ENCODE measurements at regions of chr10 and their contacts with region 1.

Region 1: GRCh38 chr10:60444494-60445064 is 54.9 kb upstream of the ANK3 start:
- DNase-seq: no peak
- H3K4me3 Mint-ChIP-seq: no peak overlapping the region
- H3K27ac Mint-ChIP-seq: no peak overlapping the region
- H3K4me1 Mint-ChIP-seq: peaks cover 27% of the 10 kb centered on the region
- H3K27me3 Mint-ChIP-seq: no peaks in the 10 kb centered on the region
- CTCF ChIP-seq: peak; percentile 61

Region 2: DNA sequence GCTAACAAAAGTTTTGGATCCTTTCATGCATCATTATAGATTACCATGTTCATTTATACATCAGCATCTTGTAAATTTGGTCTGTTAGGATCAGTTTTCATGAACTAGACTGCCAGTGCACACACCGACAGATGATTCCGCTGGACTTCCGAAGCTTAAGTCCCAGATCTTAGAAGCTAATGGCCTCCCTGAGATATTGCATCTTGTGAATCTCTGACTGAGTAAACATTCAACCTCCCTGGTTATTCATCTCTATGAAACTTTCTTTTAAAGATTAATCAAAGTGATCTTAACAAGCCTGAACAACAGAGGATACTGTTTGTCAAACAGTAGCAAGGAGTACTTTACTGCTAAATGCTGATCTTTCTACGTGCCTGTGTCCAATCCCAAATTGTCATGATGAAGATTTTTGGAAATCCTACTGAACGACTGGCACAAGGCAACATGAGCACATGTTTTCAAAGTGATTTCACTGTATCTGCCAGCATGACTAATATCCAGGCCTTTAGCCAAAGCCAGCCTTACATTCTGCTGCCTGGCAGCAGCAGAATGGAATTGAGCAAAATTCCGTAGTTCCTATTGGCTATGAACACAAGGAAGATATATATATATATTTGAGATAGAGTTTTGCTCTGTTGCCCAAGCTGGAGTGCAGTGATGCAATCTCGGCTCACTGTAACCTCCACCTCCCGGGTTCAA is 36.4 kb after region 1 on chr10:
- CTCF ChIA-PET with region 1: no interaction called
- intact Hi-C with region 1: no loop called
- DNase-seq: peak; percentile 60
- H3K4me3 Mint-ChIP-seq: no peak overlapping the region
- H3K27ac Mint-ChIP-seq: peak overlapping the region; percentile 55
- H3K4me1 Mint-ChIP-seq: peaks cover 30% of the 10 kb centered on the region
- H3K27me3 Mint-ChIP-seq: no peaks in the 10 kb centered on the region
- CTCF ChIP-seq: no peak

Region 3: DNA sequence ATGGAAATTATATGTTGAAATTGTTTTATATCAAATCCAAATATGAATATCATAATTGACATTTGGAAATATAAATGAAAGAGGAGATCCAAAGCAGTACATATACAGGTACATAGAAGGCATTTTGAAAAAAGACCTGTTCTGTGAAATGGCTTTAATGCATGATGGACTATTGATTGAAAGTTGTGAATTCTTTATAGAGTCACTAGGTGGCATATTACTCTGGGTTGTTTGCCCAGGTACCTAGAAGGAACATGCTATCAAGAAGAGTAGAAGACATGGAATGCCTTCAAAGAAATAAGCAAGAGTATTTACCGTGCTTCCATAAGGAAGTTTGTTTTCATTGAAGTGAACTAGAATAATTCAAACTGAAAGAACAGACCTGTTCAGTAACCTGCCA is 105.1 kb after region 1 on chr10:
- CTCF ChIA-PET with region 1: no interaction called
- intact Hi-C with region 1: loop called (anchors 2 kb)
- DNase-seq: peak; percentile 5
- H3K4me3 Mint-ChIP-seq: no peak overlapping the region
- H3K27ac Mint-ChIP-seq: no peak overlapping the region
- H3K4me1 Mint-ChIP-seq: no peaks in the 10 kb centered on the region
- H3K27me3 Mint-ChIP-seq: no peaks in the 10 kb centered on the region
- CTCF ChIP-seq: peak; percentile 62

Region 4: DNA sequence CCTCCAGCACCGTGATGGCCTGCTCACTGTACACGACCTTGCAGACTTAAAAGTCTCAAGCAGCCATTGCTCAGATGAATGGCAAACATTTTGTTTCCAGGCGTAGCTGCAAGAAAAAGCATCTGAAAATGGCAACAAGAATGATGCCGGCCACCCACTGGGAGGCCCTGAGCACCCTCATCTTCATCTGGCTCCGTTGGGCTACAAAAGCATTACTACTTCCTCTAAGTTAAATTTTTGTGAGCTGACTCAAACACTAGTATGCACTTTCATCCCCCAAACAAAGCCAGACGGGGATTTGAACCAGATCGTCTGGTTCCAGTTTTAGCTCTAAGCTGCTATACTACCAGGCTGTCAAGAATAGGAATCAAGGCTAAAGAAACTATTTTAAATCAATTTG is 217.1 kb after region 1 on chr10:
- CTCF ChIA-PET with region 1: no interaction called
- intact Hi-C with region 1: no loop called
- DNase-seq: peak; percentile 43
- H3K4me3 Mint-ChIP-seq: no peak overlapping the region
- H3K27ac Mint-ChIP-seq: peak overlapping the region; percentile 16
- H3K4me1 Mint-ChIP-seq: peaks cover 19% of the 10 kb centered on the region
- H3K27me3 Mint-ChIP-seq: no peaks in the 10 kb centered on the region
- CTCF ChIP-seq: no peak

Measured in Calu3 (cell line).